Tibial artery (tissue), 4 donors: ENCODE measurements at regions of chr4 and their contacts with region 1.

Region 1: DNA sequence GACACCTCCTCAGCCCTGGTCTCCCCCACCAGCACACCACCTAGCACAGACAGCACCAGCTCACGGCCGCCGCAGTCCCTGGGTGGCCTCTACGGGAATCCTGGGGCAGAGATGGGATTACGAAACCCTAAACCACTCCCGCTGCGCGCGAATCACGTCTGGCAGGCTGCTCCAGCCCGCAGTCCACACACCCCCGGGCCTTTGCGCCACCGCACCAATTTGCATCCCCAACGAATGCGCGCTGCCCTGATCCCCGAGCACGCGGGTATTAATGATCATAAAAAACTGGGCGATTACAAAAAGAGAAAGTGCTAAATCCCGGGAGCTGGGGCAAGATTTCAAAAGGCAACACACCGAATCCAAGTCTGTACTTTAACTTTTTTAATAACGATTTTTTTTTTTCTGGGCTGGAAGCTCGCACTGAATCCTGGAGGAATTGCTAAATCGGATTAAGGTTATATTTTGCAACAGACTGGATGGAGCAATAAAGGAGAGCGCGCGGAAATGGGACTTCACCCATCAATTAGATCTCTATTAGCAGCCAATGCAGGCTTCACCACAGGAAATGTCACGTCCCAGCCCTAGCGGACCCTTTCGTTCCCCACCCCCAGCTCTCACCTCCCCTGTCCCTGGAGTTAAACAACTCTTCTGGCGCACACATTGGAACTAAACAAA is 69.8 kb upstream of the TMEM33 start:
- DNase-seq: no peak
- H3K4me3 ChIP-seq: no peak overlapping the region
- H3K27ac ChIP-seq: no peak overlapping the region
- H3K4me1 ChIP-seq: peaks cover 0 to 20% (median 16%) of the 10 kb centered on the region in 4 donors
- H3K27me3 ChIP-seq: peaks cover 0 to 60% of the 10 kb centered on the region in 2 donors
- CTCF ChIP-seq: no peak

Region 2: GRCh38 chr4:41709844-41710481 is 155.5 kb before region 1 on chr4:
- intact Hi-C with region 1: loop called (anchors 10 kb)
- DNase-seq: no peak
- H3K4me3 ChIP-seq: no peak overlapping the region
- H3K27ac ChIP-seq: no peak overlapping the region
- H3K4me1 ChIP-seq: no peaks in the 10 kb centered on the region
- H3K27me3 ChIP-seq: peaks cover 0 to 5% of the 10 kb centered on the region in 2 donors
- CTCF ChIP-seq: no peak